ENCODE measurements at regions of chr14 and their contacts with region 1.

Region 1: GRCh38 chr14:93206793-93207467 is at the starts of genes GON7 and UBR7:
- DNase-seq: peak; percentile 92
- ATAC-seq: peak; percentile 96
- H3K4me3 ChIP-seq: peak within 1 kb of the TSS; percentile 2 to 97 (median 94)
- H3K4me3 Mint-ChIP-seq: peak within 1 kb of the TSS; percentile 97
- H3K27ac ChIP-seq: peak within 1 kb of the TSS; percentile 64 to 84
- H3K27ac Mint-ChIP-seq: peak within 1 kb of the TSS; percentile 91
- H3K4me1 ChIP-seq: peaks cover 28 to 42% of the 10 kb centered on the region in 2 donors
- H3K4me1 Mint-ChIP-seq: peaks cover 54% of the 10 kb centered on the region
- H3K27me3 ChIP-seq: no peaks in the 10 kb centered on the region
- H3K27me3 Mint-ChIP-seq: no peaks in the 10 kb centered on the region
- CTCF ChIP-seq: peak; percentile 21
- total RNA-seq, gene GON7: 8.9 and 9.9 TPM in 2 replicates
- total RNA-seq, gene UBR7: 17.3 and 19.1 TPM in 2 replicates

Region 2: DNA sequence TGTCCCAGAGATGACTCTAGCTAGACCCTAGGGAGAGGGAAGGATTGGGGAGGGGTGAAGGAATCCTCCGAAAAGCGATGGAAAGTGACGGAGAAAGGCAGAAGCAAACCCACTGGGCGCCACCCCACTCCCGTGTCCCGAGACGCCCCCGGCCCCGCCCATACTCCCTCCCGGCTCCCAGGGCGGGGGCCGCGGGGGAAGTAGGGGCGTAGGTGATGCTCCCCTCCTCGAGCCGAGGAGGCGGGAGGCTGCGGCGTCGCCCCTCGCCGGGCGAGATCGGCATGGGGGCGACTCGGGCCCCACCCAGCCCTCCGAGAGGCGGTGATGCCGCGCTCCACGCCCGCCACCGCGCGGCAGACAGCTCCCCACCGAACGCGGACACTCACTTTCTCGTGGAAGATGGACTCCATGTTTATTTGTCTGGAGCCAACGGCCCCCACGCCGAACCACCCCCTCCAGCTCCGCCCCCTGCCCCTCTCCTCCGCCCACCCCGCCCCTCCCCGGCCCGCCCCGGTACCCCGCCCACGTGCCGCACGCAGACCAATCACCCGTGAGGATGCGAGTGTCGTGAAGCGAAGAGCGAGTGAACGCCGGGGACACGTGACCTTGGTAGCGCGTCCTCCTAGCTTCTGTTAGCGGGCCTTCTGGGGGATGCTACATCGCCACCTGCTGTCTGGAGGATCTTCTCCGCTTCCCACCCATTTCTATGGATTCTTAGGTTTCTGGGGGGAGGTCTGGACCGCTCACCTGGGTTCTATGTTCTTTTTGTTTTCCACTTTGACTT is 1100.6 kb before region 1 on chr14 and contains the start of gene ATXN3:
- CTCF ChIA-PET with region 1: no interaction called
- POLR2A ChIA-PET with region 1: no interaction called
- intact Hi-C with region 1: loop called (anchors 2 kb)
- DNase-seq: peak; percentile 97
- ATAC-seq: peak; percentile 86
- H3K4me3 ChIP-seq: peak within 1 kb of the TSS; percentile 74 to 90 (median 81)
- H3K4me3 Mint-ChIP-seq: peak within 1 kb of the TSS; percentile 98
- H3K27ac ChIP-seq: peak within 1 kb of the TSS; percentile 77 to 83
- H3K27ac Mint-ChIP-seq: peak within 1 kb of the TSS; percentile 90
- H3K4me1 ChIP-seq: peaks cover 5 to 27% of the 10 kb centered on the region in 2 donors
- H3K4me1 Mint-ChIP-seq: peaks cover 41% of the 10 kb centered on the region
- H3K27me3 ChIP-seq: no peaks in the 10 kb centered on the region
- H3K27me3 Mint-ChIP-seq: no peaks in the 10 kb centered on the region
- CTCF ChIP-seq: peak; percentile 77
- total RNA-seq, gene ATXN3: 51.6 and 59.5 TPM in 2 replicates

Region 3: GRCh38 chr14:93184388-93185353 is 22.3 kb before region 1 on chr14 and contains the starts of genes LYSET and MOAP1:
- CTCF ChIA-PET with region 1: interaction called, 14 read pairs
- POLR2A ChIA-PET with region 1: interaction called, 11 read pairs
- intact Hi-C with region 1: loop called (anchors 1 kb)
- DNase-seq: peak; percentile 97
- ATAC-seq: peak; percentile 86
- H3K4me3 ChIP-seq: peak within 1 kb of the TSS; percentile 85 to 96 (median 90)
- H3K4me3 Mint-ChIP-seq: peak within 1 kb of the TSS; percentile 97
- H3K27ac ChIP-seq: peak within 1 kb of the TSS; percentile 97 to 98
- H3K27ac Mint-ChIP-seq: peak within 1 kb of the TSS; percentile 98
- H3K4me1 ChIP-seq: peaks cover 16 to 26% of the 10 kb centered on the region in 2 donors
- H3K4me1 Mint-ChIP-seq: peaks cover 32% of the 10 kb centered on the region
- H3K27me3 ChIP-seq: no peaks in the 10 kb centered on the region
- H3K27me3 Mint-ChIP-seq: no peaks in the 10 kb centered on the region
- CTCF ChIP-seq: peak; percentile 20
- total RNA-seq, gene LYSET: 18.0 and 18.8 TPM in 2 replicates
- total RNA-seq, gene MOAP1: 30.8 and 31.2 TPM in 2 replicates

Region 4: DNA sequence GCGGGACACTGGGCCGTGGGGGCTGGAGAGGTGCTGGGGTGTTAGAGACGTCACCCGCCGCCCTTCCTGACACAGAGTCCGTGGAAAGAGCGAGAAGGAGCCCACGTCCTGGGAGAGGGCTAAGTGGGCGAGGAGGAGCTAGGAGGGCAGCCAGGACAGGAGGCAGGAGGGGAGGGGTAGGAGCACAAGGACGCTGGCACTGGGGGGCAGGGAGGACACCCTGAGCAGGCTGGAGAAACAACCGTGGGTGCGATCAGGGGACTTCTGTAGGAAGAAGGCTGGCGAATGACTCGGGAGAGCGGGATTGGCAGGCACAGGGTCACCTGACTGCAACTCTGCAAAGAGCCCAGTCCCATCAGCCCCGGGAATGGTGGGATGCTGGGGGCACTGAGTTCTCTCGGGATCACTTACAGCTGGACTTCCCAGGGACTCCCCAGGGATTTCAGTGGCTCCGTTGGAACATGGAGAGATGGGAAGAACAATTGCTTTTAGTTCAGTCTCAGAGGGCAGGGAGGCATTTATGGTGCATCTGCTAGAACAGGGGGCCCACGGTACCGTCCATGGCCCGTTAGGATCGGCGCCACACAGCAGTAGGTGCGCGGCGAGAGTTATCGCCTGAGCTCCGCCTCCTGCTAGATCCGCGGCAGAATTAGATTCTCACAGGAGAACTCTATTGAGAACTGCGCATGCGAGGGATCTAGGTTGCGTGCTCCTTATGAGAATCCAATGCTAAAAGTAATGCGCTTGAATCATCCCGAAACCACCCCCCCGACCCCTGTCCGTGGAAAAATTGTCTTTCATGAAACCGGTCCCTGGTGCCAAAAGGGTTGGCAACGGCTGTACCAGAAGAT is 24.4 kb after region 1 on chr14:
- CTCF ChIA-PET with region 1: no interaction called
- POLR2A ChIA-PET with region 1: no interaction called
- intact Hi-C with region 1: no loop called
- DNase-seq: no peak
- ATAC-seq: no peak
- H3K4me3 ChIP-seq: peak overlapping the region in 2 of 5 experiments; percentile 11 to 14
- H3K4me3 Mint-ChIP-seq: peak overlapping the region; percentile 57
- H3K27ac ChIP-seq: no peak overlapping the region
- H3K27ac Mint-ChIP-seq: no peak overlapping the region
- H3K4me1 ChIP-seq: peaks cover 4% of the 10 kb centered on the region in 2 donors
- H3K4me1 Mint-ChIP-seq: peaks cover 12% of the 10 kb centered on the region
- H3K27me3 ChIP-seq: peaks cover 0 to 11% (median 0%) of the 10 kb centered on the region in 4 experiments
- H3K27me3 Mint-ChIP-seq: peaks cover 8% of the 10 kb centered on the region
- CTCF ChIP-seq: no peak

Region 5: GRCh38 chr14:93369713-93370266 is 162.9 kb after region 1 on chr14:
- CTCF ChIA-PET with region 1: no interaction called
- POLR2A ChIA-PET with region 1: no interaction called
- intact Hi-C with region 1: loop called (anchors 10 kb)
- DNase-seq: peak; percentile 74
- ATAC-seq: peak; percentile 88
- H3K4me3 ChIP-seq: peak overlapping the region in 1 of 5 experiments; percentile 12
- H3K4me3 Mint-ChIP-seq: peak overlapping the region; percentile 38
- H3K27ac ChIP-seq: peak overlapping the region; percentile 83 to 89
- H3K27ac Mint-ChIP-seq: peak overlapping the region; percentile 78
- H3K4me1 ChIP-seq: peaks cover 22 to 25% of the 10 kb centered on the region in 2 donors
- H3K4me1 Mint-ChIP-seq: peaks cover 40% of the 10 kb centered on the region
- H3K27me3 ChIP-seq: no peaks in the 10 kb centered on the region
- H3K27me3 Mint-ChIP-seq: no peaks in the 10 kb centered on the region
- CTCF ChIP-seq: no peak

Region 6: DNA sequence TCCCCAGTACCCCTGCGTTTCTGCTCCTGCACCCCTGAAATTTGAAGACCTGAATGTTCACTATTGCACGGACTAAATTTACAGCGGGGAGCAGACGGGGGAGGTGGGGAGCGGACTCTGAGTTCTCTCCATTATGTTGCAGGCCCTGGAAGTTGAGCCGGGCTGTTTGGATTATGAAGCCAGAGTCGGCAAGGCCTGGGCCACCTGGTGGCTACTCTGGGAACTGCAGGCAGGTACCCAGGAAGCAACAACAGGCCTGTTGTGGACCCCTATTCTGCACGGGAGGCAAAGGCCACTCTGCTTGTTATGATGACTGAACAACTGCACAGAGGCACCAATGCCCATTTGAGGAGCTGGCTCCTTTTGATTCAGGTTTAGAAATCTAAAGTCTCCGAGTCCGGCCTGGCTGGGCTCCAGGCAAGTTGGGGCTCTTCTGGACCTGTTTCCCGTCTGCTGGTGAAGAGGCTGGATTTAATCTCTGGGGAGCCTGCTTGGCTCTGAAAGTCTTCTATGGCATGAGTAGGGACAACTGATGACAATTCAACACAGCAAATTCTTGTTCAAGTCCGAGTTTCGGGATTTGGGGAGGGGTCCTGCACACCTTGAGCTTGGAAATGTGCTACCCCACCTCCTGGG is 686.1 kb after region 1 on chr14:
- CTCF ChIA-PET with region 1: no interaction called
- POLR2A ChIA-PET with region 1: no interaction called
- intact Hi-C with region 1: loop called (anchors 5 kb)
- DNase-seq: peak; percentile 67
- ATAC-seq: peak; percentile 45
- H3K4me3 ChIP-seq: no peak overlapping the region
- H3K4me3 Mint-ChIP-seq: no peak overlapping the region
- H3K27ac ChIP-seq: no peak overlapping the region
- H3K27ac Mint-ChIP-seq: no peak overlapping the region
- H3K4me1 ChIP-seq: no peaks in the 10 kb centered on the region
- H3K4me1 Mint-ChIP-seq: no peaks in the 10 kb centered on the region
- H3K27me3 ChIP-seq: peaks cover 0 to 9% (median 1%) of the 10 kb centered on the region in 4 experiments
- H3K27me3 Mint-ChIP-seq: peaks cover 36% of the 10 kb centered on the region
- CTCF ChIP-seq: peak; percentile 99

Measured in B cell (primary cell).